ENCODE measurements at regions of chr19 and their contacts with region 1.

Region 1: DNA sequence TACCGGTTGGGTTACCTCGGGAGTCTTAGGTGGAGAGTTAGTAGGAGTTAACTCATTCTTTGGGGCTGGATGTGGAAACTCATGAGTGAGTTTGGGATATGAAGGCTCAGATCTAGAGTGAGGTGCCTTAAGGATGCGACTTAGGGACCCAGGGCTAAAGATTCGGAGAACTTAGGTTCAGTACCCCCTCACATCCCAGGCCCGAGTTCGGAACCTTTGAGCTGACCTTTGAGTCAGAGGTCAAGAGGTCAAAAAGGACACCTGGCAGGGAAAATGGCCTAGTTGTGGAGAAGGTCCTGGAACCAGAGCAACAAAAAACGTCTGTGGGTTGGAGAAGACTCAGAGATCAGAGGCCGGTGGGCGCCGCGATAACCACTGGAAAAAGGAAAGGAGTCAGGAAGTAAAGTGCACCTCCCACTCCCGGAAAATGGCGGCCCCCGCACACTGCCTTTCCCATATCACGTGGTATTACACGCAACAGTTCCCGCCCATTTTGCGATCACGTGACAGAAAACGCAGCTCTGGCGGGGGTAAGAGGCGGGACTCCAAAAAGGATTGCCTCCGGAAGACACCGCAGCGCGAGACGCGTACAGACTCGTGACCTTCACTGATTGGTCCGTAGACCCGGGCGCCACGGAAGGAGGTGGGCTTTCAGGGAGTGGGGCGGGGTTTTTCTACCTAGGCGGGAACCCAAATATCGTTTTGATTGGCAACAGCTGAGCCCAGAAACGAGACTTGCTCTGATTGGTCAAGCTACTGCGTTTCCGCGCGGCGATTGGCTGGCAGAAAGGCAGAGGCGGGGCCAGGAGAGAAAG is at the start of gene ACTMAP:
- DNase-seq: peak; percentile 95 to 100 (median 100)
- ATAC-seq: peak; percentile 93
- H3K4me3 ChIP-seq: peak within 1 kb of the TSS; percentile 96
- H3K4me3 Mint-ChIP-seq: peak within 1 kb of the TSS; percentile 93 to 100 (median 96)
- H3K27ac ChIP-seq: peak within 1 kb of the TSS; percentile 84
- H3K27ac Mint-ChIP-seq: peak within 1 kb of the TSS; percentile 90 to 99 (median 98)
- H3K4me1 ChIP-seq: peaks cover 11 to 27% of the 10 kb centered on the region in 2 donors
- H3K4me1 Mint-ChIP-seq: peaks cover 31 to 43% (median 42%) of the 10 kb centered on the region in 7 donors
- H3K27me3 ChIP-seq: no peaks in the 10 kb centered on the region
- H3K27me3 Mint-ChIP-seq: no peaks in the 10 kb centered on the region
- total RNA-seq, gene ACTMAP: 5.5 to 13.7 (median 7.8) TPM

Region 2: GRCh38 chr19:40348125-40348913 is 401.9 kb before region 1 on chr19 and contains the starts of genes C19orf47 and PLD3:
- CTCF ChIA-PET with region 1: no interaction called
- POLR2A ChIA-PET with region 1: no interaction called
- intact Hi-C with region 1: loop called in 1 of 2 experiments (anchors 1 kb)
- DNase-seq: peak; percentile 92 to 99 (median 97)
- ATAC-seq: peak; percentile 97
- H3K4me3 ChIP-seq: peak within 1 kb of the TSS; percentile 61
- H3K4me3 Mint-ChIP-seq: peak within 1 kb of the TSS; percentile 83 to 99 (median 96)
- H3K27ac ChIP-seq: peak within 1 kb of the TSS; percentile 86
- H3K27ac Mint-ChIP-seq: peak within 1 kb of the TSS; percentile 81 to 98 (median 93)
- H3K4me1 ChIP-seq: peaks cover 7 to 14% of the 10 kb centered on the region in 2 donors
- H3K4me1 Mint-ChIP-seq: peaks cover 20 to 51% (median 44%) of the 10 kb centered on the region in 7 donors
- H3K27me3 ChIP-seq: no peaks in the 10 kb centered on the region
- H3K27me3 Mint-ChIP-seq: peaks cover 0 to 2% (median 0%) of the 10 kb centered on the region in 5 donors
- total RNA-seq, gene C19orf47: 12.6 to 20.3 (median 15.8) TPM
- total RNA-seq, gene PLD3: 75.4 to 137 (median 114) TPM

Region 3: GRCh38 chr19:40640744-40641143 is 109.5 kb before region 1 on chr19:
- CTCF ChIA-PET with region 1: no interaction called
- POLR2A ChIA-PET with region 1: no interaction called
- intact Hi-C with region 1: no loop called
- DNase-seq: peak in 2 of 9 donors; percentile 7 to 8
- ATAC-seq: no peak
- H3K4me3 ChIP-seq: no peak overlapping the region
- H3K4me3 Mint-ChIP-seq: no peak overlapping the region
- H3K27ac ChIP-seq: no peak overlapping the region
- H3K27ac Mint-ChIP-seq: peak overlapping the region in 3 of 9 donors; percentile 33 to 73 (median 60)
- H3K4me1 ChIP-seq: no peaks in the 10 kb centered on the region
- H3K4me1 Mint-ChIP-seq: peaks cover 0 to 12% (median 6%) of the 10 kb centered on the region in 7 donors
- H3K27me3 ChIP-seq: no peaks in the 10 kb centered on the region
- H3K27me3 Mint-ChIP-seq: peaks cover 0 to 8% (median 2%) of the 10 kb centered on the region in 5 donors

Region 4: DNA sequence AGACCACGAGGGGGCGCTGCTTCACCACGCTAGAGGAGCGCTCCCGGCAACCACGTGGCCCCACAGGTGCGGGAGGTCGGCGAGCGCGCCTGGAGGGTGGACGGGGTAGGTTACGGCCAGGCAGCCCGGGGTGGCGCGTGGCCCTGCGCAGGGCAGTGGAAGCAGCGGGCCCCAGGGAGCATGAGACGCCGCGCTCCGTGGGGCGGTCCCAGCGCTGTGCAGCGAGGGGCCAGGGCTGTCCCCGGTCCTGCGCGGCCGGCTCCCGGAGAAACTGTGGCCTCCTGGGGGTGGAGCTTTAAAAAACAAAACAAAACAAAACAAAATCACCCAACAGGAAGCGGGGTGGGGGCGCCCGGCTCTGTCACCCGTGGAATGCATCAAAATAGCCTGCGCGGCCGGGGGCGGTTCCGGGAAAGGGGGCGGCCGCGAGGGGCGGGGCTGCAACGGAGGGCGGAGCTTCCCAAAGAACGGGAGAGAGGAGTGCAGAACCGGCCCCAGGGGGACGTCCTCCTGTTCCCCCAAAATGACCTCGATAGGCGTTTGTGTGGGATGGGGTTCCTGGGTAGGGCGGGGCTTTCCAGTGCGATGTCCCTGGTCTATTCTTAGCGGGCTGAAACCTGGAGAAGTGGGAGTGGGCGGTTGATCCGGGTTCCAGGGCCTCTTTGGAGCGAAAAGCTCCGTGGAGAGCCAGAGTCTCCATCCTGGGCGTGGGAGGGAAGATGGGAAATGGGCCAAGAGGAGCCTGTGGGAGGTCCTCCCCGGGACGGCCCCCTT is 87.2 kb before region 1 on chr19:
- CTCF ChIA-PET with region 1: interaction called, 3 read pairs
- POLR2A ChIA-PET with region 1: interaction called, 4 read pairs
- intact Hi-C with region 1: loop called (anchors 1 to 2 kb)
- DNase-seq: peak; percentile 81 to 96 (median 92)
- ATAC-seq: peak; percentile 96
- H3K4me3 ChIP-seq: peak overlapping the region; percentile 75
- H3K4me3 Mint-ChIP-seq: peak overlapping the region; percentile 76 to 91 (median 84)
- H3K27ac ChIP-seq: peak overlapping the region; percentile 75
- H3K27ac Mint-ChIP-seq: peak overlapping the region; percentile 67 to 91 (median 84)
- H3K4me1 ChIP-seq: peaks cover 0 to 7% of the 10 kb centered on the region in 2 donors
- H3K4me1 Mint-ChIP-seq: peaks cover 0 to 27% (median 6%) of the 10 kb centered on the region in 7 donors
- H3K27me3 ChIP-seq: no peaks in the 10 kb centered on the region
- H3K27me3 Mint-ChIP-seq: peaks cover 0 to 4% (median 0%) of the 10 kb centered on the region in 5 donors

Region 5: GRCh38 chr19:40700083-40700482 is 50.2 kb before region 1 on chr19:
- CTCF ChIA-PET with region 1: no interaction called
- POLR2A ChIA-PET with region 1: no interaction called
- intact Hi-C with region 1: no loop called
- DNase-seq: no peak
- ATAC-seq: no peak
- H3K4me3 ChIP-seq: no peak overlapping the region
- H3K4me3 Mint-ChIP-seq: no peak overlapping the region
- H3K27ac ChIP-seq: no peak overlapping the region
- H3K27ac Mint-ChIP-seq: no peak overlapping the region
- H3K4me1 ChIP-seq: no peaks in the 10 kb centered on the region
- H3K4me1 Mint-ChIP-seq: peaks cover 0 to 3% (median 0%) of the 10 kb centered on the region in 7 donors
- H3K27me3 ChIP-seq: no peaks in the 10 kb centered on the region
- H3K27me3 Mint-ChIP-seq: no peaks in the 10 kb centered on the region

Region 6: GRCh38 chr19:40798223-40798996 is 48.1 kb after region 1 on chr19:
- CTCF ChIA-PET with region 1: interaction called, 9 read pairs
- POLR2A ChIA-PET with region 1: interaction called, 21 read pairs
- intact Hi-C with region 1: loop called (anchors 1 kb)
- DNase-seq: peak; percentile 48 to 100 (median 100)
- ATAC-seq: peak; percentile 92
- H3K4me3 ChIP-seq: peak overlapping the region; percentile 77
- H3K4me3 Mint-ChIP-seq: peak overlapping the region; percentile 89 to 100 (median 95)
- H3K27ac ChIP-seq: peak overlapping the region; percentile 90
- H3K27ac Mint-ChIP-seq: peak overlapping the region; percentile 96 to 100 (median 99)
- H3K4me1 ChIP-seq: peaks cover 35 to 39% of the 10 kb centered on the region in 2 donors
- H3K4me1 Mint-ChIP-seq: peaks cover 28 to 56% (median 48%) of the 10 kb centered on the region in 7 donors
- H3K27me3 ChIP-seq: no peaks in the 10 kb centered on the region
- H3K27me3 Mint-ChIP-seq: no peaks in the 10 kb centered on the region

Region 7: DNA sequence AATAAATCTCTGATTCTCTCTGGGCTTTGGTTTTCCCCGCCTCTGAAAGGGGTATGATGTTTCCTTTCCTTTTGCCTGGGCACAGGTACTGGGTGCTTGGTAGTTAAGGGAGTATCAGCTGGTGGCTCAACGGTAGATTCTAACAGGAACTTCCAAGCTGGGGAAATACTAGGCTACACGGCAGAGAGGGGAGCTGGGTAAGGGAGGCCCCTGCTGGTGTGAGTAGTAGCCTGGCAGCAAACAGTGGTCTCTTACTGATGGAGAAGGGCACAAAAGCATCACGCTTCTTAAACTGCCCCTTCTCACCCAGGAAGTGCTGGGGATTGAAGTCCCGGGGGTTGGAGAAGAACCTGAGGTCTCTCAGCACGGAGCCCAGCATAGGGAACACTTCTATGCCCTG is 158.7 kb after region 1 on chr19:
- CTCF ChIA-PET with region 1: no interaction called
- POLR2A ChIA-PET with region 1: no interaction called
- intact Hi-C with region 1: loop called in 1 of 2 experiments (anchors 1 kb)
- DNase-seq: peak in 5 of 9 donors; percentile 31 to 64 (median 43)
- ATAC-seq: no peak
- H3K4me3 ChIP-seq: peak overlapping the region; percentile 60
- H3K4me3 Mint-ChIP-seq: peak overlapping the region in 9 of 10 donors; percentile 68 to 89 (median 83)
- H3K27ac ChIP-seq: no peak overlapping the region
- H3K27ac Mint-ChIP-seq: peak overlapping the region in 5 of 9 donors; percentile 46 to 95 (median 87)
- H3K4me1 ChIP-seq: peaks cover 0 to 10% of the 10 kb centered on the region in 2 donors
- H3K4me1 Mint-ChIP-seq: peaks cover 4 to 16% (median 11%) of the 10 kb centered on the region in 7 donors
- H3K27me3 ChIP-seq: no peaks in the 10 kb centered on the region
- H3K27me3 Mint-ChIP-seq: peaks cover 7 to 32% (median 13%) of the 10 kb centered on the region in 5 donors

Region 8: DNA sequence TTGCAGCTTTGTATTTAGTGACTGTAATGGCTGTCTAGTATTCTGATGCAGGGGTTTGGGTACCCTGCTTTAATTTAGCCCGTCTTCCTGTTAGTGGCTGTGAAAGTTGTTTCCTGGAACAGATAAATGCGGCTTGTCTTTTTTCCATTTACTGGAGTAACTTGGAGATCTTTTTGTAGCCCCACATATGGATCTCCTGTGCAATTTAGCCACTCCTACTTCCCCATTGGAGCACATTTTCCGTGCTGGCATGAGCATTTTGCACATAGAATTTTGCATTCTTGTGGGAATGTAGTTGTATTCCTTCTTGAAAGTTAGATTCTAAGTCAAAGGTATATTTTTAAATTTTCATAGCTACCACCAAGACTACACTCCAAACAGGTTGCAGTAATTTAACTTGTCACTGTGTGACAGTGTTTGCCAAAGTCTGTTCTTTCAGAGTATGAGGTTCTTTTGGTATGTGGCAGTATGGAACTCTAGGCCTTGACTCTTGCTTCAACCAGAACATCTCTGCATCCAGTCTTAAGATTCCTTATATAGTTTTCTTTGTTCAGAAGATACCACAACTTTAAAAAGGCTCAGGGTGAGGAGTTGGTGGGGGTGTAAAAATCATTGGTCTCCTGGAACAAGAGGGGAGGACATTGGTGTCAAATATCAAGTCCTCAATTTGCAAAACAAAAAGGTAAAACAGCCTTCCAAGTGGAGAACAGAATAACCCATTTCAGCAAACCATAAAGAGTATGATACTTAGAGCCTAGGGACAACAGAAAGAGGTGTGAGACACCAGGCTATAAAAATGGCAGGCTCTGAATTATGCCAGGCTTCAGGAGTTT is 538.6 kb after region 1 on chr19:
- CTCF ChIA-PET with region 1: no interaction called
- POLR2A ChIA-PET with region 1: no interaction called
- intact Hi-C with region 1: no loop called
- DNase-seq: no peak
- ATAC-seq: no peak
- H3K4me3 ChIP-seq: no peak overlapping the region
- H3K4me3 Mint-ChIP-seq: no peak overlapping the region
- H3K27ac ChIP-seq: no peak overlapping the region
- H3K27ac Mint-ChIP-seq: peak overlapping the region in 6 of 9 donors; percentile 8 to 61 (median 48)
- H3K4me1 ChIP-seq: peaks cover 0 to 5% of the 10 kb centered on the region in 2 donors
- H3K4me1 Mint-ChIP-seq: peaks cover 0 to 23% (median 10%) of the 10 kb centered on the region in 7 donors
- H3K27me3 ChIP-seq: no peaks in the 10 kb centered on the region
- H3K27me3 Mint-ChIP-seq: no peaks in the 10 kb centered on the region

Region 9: DNA sequence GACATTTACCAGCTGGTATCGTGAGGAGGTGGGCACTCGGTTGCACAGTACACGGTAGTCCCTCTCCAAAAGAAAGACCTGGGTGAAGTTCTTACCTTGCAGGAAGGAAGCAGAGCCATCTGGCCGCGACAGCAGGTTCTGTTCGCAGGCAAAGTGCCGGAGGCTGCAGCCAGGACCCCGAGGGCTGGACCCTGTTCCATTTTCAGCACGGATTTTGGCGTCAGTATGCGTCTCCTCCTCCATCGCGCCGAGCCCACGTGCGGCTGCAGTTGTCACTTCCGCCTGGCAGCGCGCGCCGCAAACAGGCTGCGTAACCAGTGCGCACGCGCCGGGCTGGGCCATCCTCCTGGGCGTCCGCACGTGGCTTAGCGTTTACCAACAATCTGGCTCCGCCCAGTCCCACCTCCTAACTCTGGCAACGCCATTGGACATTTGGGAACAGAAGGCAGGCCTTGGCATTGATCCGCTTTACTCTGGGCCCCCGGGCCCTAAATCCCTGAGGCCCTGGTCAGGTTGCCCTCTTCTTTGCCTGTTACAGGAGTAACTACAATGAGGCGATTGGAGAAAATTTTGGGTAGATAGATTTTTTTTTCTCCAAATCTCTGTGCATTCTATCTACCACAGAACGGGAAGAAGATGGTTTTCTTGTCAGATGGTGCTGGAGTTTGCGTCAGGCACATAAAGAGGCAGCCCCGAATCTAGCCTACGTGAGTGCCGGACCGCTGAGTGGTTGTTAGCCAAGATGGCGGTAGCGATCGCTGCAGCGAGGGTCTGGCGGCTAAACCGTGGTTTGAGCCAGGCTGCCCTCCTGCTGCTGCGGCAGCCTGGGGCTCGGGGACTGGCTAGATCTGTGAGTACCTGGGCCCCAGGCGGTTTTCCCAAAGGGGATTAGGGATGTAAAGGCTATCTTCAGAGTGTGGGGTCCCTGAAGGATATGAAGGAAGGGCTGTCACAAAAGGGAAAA is 647.1 kb after region 1 on chr19 and contains the starts of genes BCKDHA and EXOSC5:
- CTCF ChIA-PET with region 1: no interaction called
- POLR2A ChIA-PET with region 1: no interaction called
- intact Hi-C with region 1: loop called (anchors 1 kb)
- DNase-seq: peak; percentile 96 to 100 (median 99)
- ATAC-seq: peak; percentile 99
- H3K4me3 ChIP-seq: peak within 1 kb of the TSS; percentile 96
- H3K4me3 Mint-ChIP-seq: peak within 1 kb of the TSS; percentile 95 to 99 (median 98)
- H3K27ac ChIP-seq: peak within 1 kb of the TSS; percentile 89
- H3K27ac Mint-ChIP-seq: peak within 1 kb of the TSS; percentile 99 to 100 (median 100)
- H3K4me1 ChIP-seq: peaks cover 19 to 23% of the 10 kb centered on the region in 2 donors
- H3K4me1 Mint-ChIP-seq: peaks cover 33 to 61% (median 50%) of the 10 kb centered on the region in 7 donors
- H3K27me3 ChIP-seq: no peaks in the 10 kb centered on the region
- H3K27me3 Mint-ChIP-seq: no peaks in the 10 kb centered on the region
- total RNA-seq, gene BCKDHA: 19.4 to 25.0 (median 20.5) TPM
- total RNA-seq, gene EXOSC5: 15.0 to 37.5 (median 20.6) TPM